ENCODE measurements at regions of chr14 and their contacts with region 1.

Region 1: GRCh38 chr14:58199726-58200479 is at the start of gene ACTR10:
- DNase-seq: peak; percentile 74 to 95 (median 88)
- ATAC-seq: peak; percentile 85 to 88
- H3K4me3 Mint-ChIP-seq: peak within 1 kb of the TSS; percentile 93 to 99 (median 96)
- H3K27ac Mint-ChIP-seq: peak within 1 kb of the TSS; percentile 93 to 98 (median 97)
- H3K4me1 Mint-ChIP-seq: peaks cover 13 to 47% (median 32%) of the 10 kb centered on the region in 4 donors
- H3K27me3 Mint-ChIP-seq: peaks cover 0 to under 1% (median 0%) of the 10 kb centered on the region in 5 donors
- polyA plus RNA-seq, gene ACTR10: 80.3 to 87.2 (median 84.7) TPM

Region 2: GRCh38 chr14:58239244-58240195 is 39.6 kb after region 1 on chr14:
- POLR2A ChIA-PET with region 1: interaction called, 15 read pairs
- DNase-seq: peak; percentile 68 to 94 (median 84)
- ATAC-seq: peak; percentile 35 to 37
- H3K4me3 Mint-ChIP-seq: no peak overlapping the region
- H3K27ac Mint-ChIP-seq: no peak overlapping the region
- H3K4me1 Mint-ChIP-seq: peaks cover 16 to 24% (median 21%) of the 10 kb centered on the region in 4 donors
- H3K27me3 Mint-ChIP-seq: peaks cover 0 to 2% (median 0%) of the 10 kb centered on the region in 5 donors

Region 3: DNA sequence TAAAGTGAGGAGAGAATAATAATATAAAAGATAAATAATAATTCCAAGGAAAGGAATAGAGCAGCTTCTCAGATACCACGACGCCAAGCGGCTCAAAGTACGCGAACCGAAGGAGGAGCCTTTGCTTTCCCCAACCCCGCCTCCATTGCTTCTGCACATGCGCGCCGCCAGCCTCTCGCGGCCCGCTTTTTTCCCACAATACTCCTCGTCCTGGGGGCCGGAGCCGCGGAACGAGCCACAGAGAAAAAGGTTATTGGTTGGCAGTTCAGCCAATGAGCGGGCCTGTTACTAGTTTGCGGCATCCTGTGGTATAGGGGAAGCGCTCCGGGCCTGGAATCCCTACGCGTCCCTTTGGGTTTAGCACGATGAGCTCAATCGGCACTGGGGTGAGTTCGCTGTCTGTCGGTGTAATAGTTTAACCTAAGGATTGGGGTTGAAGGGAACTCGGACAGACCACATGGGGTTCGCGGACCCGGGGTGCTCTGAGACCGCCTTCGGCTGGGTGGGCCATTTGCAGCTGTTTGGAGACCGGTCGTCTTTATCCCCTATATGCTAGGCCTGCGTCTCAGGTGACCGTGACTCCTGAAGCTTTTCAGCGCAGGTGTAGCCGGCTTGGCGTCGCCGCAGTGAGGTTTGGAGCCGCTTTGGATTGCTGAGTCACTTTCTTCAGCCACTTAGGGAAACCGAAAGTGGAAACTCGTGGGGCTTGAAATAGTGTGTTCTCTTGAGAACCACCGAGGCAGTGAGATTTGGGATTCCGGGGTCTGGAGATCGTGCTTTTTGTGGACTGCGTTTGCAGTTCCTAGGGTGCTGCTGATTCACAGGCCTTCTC is 44.9 kb after region 1 on chr14 and contains the start of gene PSMA3:
- POLR2A ChIA-PET with region 1: interaction called, 15 read pairs
- DNase-seq: peak; percentile 93 to 99 (median 98)
- ATAC-seq: peak; percentile 91
- H3K4me3 Mint-ChIP-seq: peak within 1 kb of the TSS; percentile 93 to 100 (median 98)
- H3K27ac Mint-ChIP-seq: peak within 1 kb of the TSS; percentile 97 to 99 (median 98)
- H3K4me1 Mint-ChIP-seq: peaks cover 22 to 52% (median 51%) of the 10 kb centered on the region in 4 donors
- H3K27me3 Mint-ChIP-seq: peaks cover 0 to 1% (median 0%) of the 10 kb centered on the region in 5 donors
- polyA plus RNA-seq, gene PSMA3: 135 to 144 (median 142) TPM

Region 4: DNA sequence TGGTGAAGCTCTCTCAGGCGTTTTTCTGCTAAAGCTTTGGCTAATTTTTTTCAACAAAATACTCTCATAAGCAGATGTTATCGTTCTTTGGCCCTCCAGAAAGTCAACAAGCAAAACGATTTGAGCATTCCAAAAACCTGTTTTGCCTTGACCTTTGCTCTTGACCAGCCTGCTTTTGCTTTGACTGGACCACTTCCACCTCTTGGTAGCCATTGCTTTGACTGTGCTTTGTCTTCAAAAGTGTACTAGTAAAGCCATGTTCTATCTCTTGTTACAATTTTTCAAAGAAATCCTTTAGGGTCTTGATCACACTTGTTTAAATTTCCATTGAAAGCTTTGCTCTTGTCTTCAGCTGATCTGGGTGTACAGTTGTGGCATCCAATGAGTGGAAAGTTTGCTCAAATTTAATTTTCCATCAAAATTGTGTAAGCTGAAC is 87.7 kb after region 1 on chr14:
- POLR2A ChIA-PET with region 1: no interaction called
- DNase-seq: no peak
- ATAC-seq: no peak
- H3K4me3 Mint-ChIP-seq: no peak overlapping the region
- H3K27ac Mint-ChIP-seq: peak overlapping the region in 6 of 10 donors; percentile 2 to 67 (median 32)
- H3K4me1 Mint-ChIP-seq: peaks cover 35 to 77% (median 69%) of the 10 kb centered on the region in 4 donors
- H3K27me3 Mint-ChIP-seq: no peaks in the 10 kb centered on the region

Measured in naive thymus-derived CD8-positive, alpha-beta T cell (primary cell).